Activated naive CD4-positive, alpha-beta T cell treated with anti-CD3 and anti-CD28 coated beads for 36 hours (primary cell): ENCODE measurements at regions of chr2 and their contacts with region 1.

Region 1: GRCh38 chr2:143034292-143035074 is 94.7 kb upstream of the ARHGAP15 start:
- DNase-seq: peak; percentile 78
- H3K4me3 Mint-ChIP-seq: no peak overlapping the region
- H3K27ac Mint-ChIP-seq: no peak overlapping the region
- H3K4me1 Mint-ChIP-seq: peaks cover 14% of the 10 kb centered on the region
- H3K27me3 Mint-ChIP-seq: peaks cover 7% of the 10 kb centered on the region

Region 2: GRCh38 chr2:142796161-142796560 is 238.3 kb before region 1 on chr2:
- CTCF ChIA-PET with region 1: no interaction called
- intact Hi-C with region 1: no loop called
- DNase-seq: no peak
- H3K4me3 Mint-ChIP-seq: no peak overlapping the region
- H3K27ac Mint-ChIP-seq: no peak overlapping the region
- H3K4me1 Mint-ChIP-seq: no peaks in the 10 kb centered on the region
- H3K27me3 Mint-ChIP-seq: no peaks in the 10 kb centered on the region

Region 3: DNA sequence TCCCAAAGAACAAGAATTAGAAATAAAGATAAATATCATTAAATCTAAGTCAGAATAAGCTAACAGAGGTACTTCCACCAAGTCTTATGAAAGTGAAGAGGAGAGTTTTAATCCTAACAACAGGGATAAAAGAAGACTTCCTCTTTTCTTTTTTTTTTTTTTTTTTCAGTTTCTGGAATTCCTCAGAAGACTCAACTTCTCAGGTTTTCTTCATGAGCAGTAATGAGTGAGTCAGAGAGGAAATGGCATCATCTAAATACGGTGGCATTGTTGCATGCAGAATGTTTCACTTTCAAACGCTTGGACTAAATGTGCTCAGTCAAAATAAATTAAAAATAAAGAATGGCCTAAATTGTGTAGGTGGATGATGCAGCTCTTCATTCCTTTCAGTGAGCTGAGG is 49.2 kb after region 1 on chr2:
- CTCF ChIA-PET with region 1: interaction called, 4 read pairs
- intact Hi-C with region 1: loop called (anchors 1 kb)
- DNase-seq: peak; percentile 15
- H3K4me3 Mint-ChIP-seq: no peak overlapping the region
- H3K27ac Mint-ChIP-seq: no peak overlapping the region
- H3K4me1 Mint-ChIP-seq: peaks cover 27% of the 10 kb centered on the region
- H3K27me3 Mint-ChIP-seq: no peaks in the 10 kb centered on the region

Region 4: GRCh38 chr2:143284087-143284675 is 249.7 kb after region 1 on chr2:
- CTCF ChIA-PET with region 1: interaction called, 3 read pairs
- intact Hi-C with region 1: loop called (anchors 1 kb)
- DNase-seq: peak; percentile 38
- H3K4me3 Mint-ChIP-seq: no peak overlapping the region
- H3K27ac Mint-ChIP-seq: no peak overlapping the region
- H3K4me1 Mint-ChIP-seq: peaks cover 48% of the 10 kb centered on the region
- H3K27me3 Mint-ChIP-seq: no peaks in the 10 kb centered on the region

Region 5: GRCh38 chr2:143513081-143513480 is 478.6 kb after region 1 on chr2:
- CTCF ChIA-PET with region 1: no interaction called
- intact Hi-C with region 1: loop called (anchors 10 kb)
- DNase-seq: no peak
- H3K4me3 Mint-ChIP-seq: no peak overlapping the region
- H3K27ac Mint-ChIP-seq: no peak overlapping the region
- H3K4me1 Mint-ChIP-seq: no peaks in the 10 kb centered on the region
- H3K27me3 Mint-ChIP-seq: no peaks in the 10 kb centered on the region